Esophagus muscularis mucosa (tissue), 4 donors: ENCODE measurements at regions of chr5 and their contacts with region 1.

Region 1: DNA sequence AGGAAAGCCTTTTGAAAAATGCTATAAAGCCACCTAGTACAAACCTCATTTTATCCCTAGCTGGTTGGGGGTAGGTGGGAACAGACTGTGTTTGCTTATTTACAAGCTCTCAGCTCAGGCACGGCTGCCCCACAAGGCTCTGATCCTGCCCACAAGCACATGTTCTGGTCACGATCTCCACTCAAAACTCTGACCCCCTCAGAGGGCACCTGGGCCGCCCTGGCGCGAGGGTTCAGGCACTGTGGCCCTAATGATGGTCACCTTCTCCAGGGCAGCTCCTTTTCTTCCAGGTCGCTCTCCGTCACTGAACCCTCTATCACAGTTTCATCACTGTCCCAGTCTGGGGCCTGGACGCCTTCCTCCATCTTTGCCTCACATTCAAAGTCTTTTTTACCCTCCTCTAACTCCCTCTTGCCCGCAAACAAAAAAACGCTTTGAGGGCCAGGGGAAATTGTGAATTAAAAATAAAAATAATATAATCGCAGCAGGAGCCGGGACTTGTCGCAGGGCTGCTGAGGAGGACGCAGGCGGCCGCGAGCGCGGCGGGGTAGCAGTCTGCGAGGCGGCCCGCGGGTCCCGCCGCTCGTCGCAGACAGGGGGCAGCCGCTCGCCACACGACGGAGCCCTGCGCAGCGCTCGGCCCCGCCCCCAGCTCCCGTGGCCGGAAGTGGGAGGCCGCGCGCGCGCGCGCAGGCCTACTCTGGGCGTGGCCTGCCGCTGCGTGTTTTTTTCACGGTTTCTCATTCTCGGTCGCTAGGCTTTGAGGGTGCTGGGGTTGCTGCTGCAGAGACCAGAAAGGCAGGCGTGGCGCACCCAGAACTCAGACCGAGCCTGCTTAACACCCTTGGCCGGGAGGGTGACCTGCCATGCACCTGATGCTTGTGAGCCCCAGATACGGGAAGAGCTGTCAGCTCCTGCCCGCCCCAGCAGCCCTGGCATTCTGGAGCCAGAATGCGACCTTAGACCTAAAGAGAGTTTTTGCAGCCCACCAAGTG is at the start of gene ANKRD31:
- DNase-seq: no peak
- H3K4me3 ChIP-seq: peak within 1 kb of the TSS; percentile 65 to 75 (median 68)
- H3K27ac ChIP-seq: peak within 1 kb of the TSS; percentile 64 to 81 (median 75)
- H3K4me1 ChIP-seq: peaks cover 3 to 16% (median 12%) of the 10 kb centered on the region in 4 donors
- H3K27me3 ChIP-seq: no peaks in the 10 kb centered on the region
- CTCF ChIP-seq: peak; percentile 94 to 97 (median 97)
- EP300 ChIP-seq: no peak
- POLR2A ChIP-seq: no peak
- total RNA-seq, gene ANKRD31: under 0.01 to 0.11 (median 0.03) TPM

Region 2: DNA sequence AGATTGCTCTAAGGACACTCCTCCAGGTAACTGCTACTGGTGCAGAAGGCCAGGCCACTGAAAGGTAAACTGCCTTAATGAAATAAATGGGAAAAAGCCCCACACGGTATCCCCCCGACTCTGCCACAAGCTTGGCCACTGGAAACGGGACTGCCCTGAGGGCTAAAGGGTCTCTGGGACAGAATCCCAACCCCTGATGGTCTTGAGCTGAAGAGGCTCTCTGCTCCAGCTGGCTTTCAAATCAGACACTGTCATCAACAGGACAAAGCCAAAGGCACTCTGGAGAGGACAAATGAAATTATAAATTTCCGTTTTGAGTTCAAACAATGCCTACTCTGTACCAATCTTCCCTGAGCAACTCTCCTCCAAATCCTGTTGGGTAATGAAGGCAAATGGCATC is 66.8 kb after region 1 on chr5:
- intact Hi-C with region 1: no loop called
- DNase-seq: no peak
- H3K4me3 ChIP-seq: no peak overlapping the region
- H3K27ac ChIP-seq: no peak overlapping the region
- H3K4me1 ChIP-seq: no peaks in the 10 kb centered on the region
- H3K27me3 ChIP-seq: no peaks in the 10 kb centered on the region
- CTCF ChIP-seq: no peak
- EP300 ChIP-seq: no peak
- POLR2A ChIP-seq: no peak

Region 3: DNA sequence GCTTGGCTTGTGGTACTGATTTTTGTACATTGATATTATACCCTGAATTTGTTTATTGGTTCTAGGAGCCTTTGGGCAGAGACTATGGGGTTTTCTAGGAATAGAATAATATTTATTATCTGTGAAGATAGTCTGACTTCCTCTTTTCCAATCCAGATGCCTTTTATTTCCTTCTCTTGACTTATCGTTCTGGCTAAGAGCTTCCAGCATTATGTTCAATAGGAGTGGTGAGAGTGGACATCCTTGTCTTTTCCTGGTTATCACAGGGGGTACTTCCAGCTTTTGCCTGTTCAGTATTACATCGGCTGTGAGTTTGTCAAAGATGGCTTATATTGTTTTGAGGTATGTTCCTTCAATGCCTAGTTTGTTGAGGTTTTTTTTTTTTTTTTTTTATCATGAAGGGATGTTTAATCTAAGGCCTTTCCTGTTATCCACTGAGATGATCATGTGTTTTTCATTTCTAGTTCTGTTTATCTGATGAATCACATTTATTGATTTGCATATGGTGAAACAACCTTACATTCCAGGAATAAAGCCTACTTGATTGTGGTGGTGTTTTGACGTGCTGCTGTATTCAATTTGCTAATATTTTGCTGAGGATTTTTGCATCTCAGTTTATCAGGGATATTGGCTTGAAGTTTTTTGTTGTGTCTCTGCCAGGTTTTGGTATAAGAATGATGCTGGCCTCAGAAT is 197.3 kb after region 1 on chr5:
- intact Hi-C with region 1: no loop called
- DNase-seq: no peak
- H3K4me3 ChIP-seq: no peak overlapping the region
- H3K27ac ChIP-seq: no peak overlapping the region
- H3K4me1 ChIP-seq: peaks cover 0 to 10% (median 9%) of the 10 kb centered on the region in 4 donors
- H3K27me3 ChIP-seq: no peaks in the 10 kb centered on the region
- CTCF ChIP-seq: no peak
- EP300 ChIP-seq: no peak
- POLR2A ChIP-seq: no peak

Region 4: DNA sequence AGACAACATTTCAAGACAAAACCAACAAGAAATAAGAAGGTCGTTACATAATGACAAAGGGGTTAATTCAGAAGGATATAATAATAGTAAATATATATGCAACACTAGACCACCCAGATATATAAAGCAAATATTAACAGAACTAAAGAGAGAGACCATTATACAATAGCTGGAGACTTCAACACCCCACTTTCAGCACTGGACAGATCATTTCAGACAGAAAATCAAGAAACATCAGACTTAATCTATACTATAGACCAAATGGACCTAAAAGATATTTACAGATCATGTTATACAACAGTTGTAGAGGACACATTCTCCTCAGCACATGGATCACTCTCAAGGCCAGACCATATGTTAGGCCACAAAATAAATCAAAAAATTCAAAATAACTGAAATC is 248.0 kb after region 1 on chr5:
- intact Hi-C with region 1: no loop called
- DNase-seq: no peak
- H3K4me3 ChIP-seq: no peak overlapping the region
- H3K27ac ChIP-seq: no peak overlapping the region
- H3K4me1 ChIP-seq: no peaks in the 10 kb centered on the region
- H3K27me3 ChIP-seq: no peaks in the 10 kb centered on the region
- CTCF ChIP-seq: no peak
- EP300 ChIP-seq: no peak
- POLR2A ChIP-seq: no peak

Region 5: GRCh38 chr5:75681125-75681830 is 444.7 kb after region 1 on chr5:
- intact Hi-C with region 1: loop called (anchors 10 kb)
- DNase-seq: no peak
- H3K4me3 ChIP-seq: peak overlapping the region in 1 of 4 donors; percentile 3
- H3K27ac ChIP-seq: peak overlapping the region; percentile 14 to 64 (median 30)
- H3K4me1 ChIP-seq: peaks cover 0 to 20% (median 12%) of the 10 kb centered on the region in 4 donors
- H3K27me3 ChIP-seq: no peaks in the 10 kb centered on the region
- CTCF ChIP-seq: peak; percentile 72 to 93 (median 80)
- EP300 ChIP-seq: no peak
- POLR2A ChIP-seq: no peak